ENCODE measurements at regions of chr6 and their contacts with region 1.

Region 1: GRCh38 chr6:109073344-109074132 is 21.1 kb downstream of the SESN1 start:
- DNase-seq: no peak
- H3K4me3 ChIP-seq: no peak overlapping the region
- H3K27ac ChIP-seq: peak overlapping the region in 1 of 4 donors; percentile 8
- H3K4me1 ChIP-seq: peaks cover 0 to 48% (median 19%) of the 10 kb centered on the region in 4 donors
- H3K27me3 ChIP-seq: no peaks in the 10 kb centered on the region
- CTCF ChIP-seq: peak; percentile 45 to 63 (median 56)
- EP300 ChIP-seq: peak in 1 of 4 donors; percentile 16
- POLR2A ChIP-seq: no peak

Region 2: DNA sequence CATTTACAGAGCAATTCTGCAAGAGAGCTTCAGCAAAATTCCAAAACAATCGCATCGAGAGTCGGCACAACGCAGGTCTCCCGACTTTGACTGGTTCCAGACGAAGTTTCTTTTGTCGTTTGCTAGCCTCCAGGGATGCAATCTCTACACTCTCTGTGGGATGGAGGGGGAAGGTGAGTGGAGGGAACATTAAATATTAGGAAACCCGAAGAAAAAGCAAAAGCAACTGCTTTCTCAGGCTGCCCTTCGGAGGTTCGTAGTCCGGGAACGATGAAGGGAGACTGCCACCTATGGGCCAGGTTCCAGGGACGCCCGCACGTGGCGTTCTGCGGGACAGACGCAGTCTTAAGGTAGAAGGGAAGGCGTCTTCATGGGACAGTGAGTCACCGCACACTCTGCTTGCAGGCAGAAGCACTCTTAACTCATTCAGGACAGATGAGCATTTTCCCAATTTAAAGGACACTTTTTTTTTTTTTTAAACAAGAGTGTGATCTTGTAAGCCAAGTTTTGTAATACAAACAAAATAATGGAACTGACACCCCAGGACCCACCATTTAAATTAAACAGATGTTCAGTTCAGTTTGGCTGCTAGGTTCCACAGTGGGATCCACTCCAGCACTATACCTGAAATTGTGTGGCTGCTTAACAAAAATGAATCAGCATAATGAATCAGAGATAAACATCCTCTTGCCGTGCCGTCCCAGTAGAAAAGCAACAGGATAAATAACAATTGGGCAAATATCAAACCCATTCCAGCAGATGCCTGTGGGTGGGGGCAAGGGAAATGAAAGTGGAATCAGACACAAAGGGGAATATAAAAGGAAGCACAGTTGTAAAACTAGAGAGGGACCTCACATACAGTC is 291.1 kb before region 1 on chr6:
- intact Hi-C with region 1: loop called (anchors 10 kb)
- DNase-seq: peak; percentile 93
- H3K4me3 ChIP-seq: peak overlapping the region; percentile 23 to 52 (median 42)
- H3K27ac ChIP-seq: peak overlapping the region; percentile 63 to 83 (median 68)
- H3K4me1 ChIP-seq: peaks cover 0 to 23% (median 14%) of the 10 kb centered on the region in 4 donors
- H3K27me3 ChIP-seq: no peaks in the 10 kb centered on the region
- CTCF ChIP-seq: peak; percentile 55 to 76 (median 64)
- EP300 ChIP-seq: peak in 2 of 4 donors; percentile 28 to 51
- POLR2A ChIP-seq: no peak

Region 3: GRCh38 chr6:108896111-108896661 is 177.4 kb before region 1 on chr6:
- intact Hi-C with region 1: loop called (anchors 5 kb)
- DNase-seq: no peak
- H3K4me3 ChIP-seq: no peak overlapping the region
- H3K27ac ChIP-seq: peak overlapping the region; percentile 15 to 62 (median 48)
- H3K4me1 ChIP-seq: peaks cover 0 to 3% (median 0%) of the 10 kb centered on the region in 4 donors
- H3K27me3 ChIP-seq: no peaks in the 10 kb centered on the region
- CTCF ChIP-seq: no peak
- EP300 ChIP-seq: peak in 2 of 4 donors; percentile 50 to 56
- POLR2A ChIP-seq: no peak

Region 4: GRCh38 chr6:108947114-108947854 is 126.3 kb before region 1 on chr6:
- intact Hi-C with region 1: loop called (anchors 5 kb)
- DNase-seq: no peak
- H3K4me3 ChIP-seq: no peak overlapping the region
- H3K27ac ChIP-seq: peak overlapping the region; percentile 83 to 93 (median 86)
- H3K4me1 ChIP-seq: peaks cover 0 to 79% (median 61%) of the 10 kb centered on the region in 4 donors
- H3K27me3 ChIP-seq: no peaks in the 10 kb centered on the region
- CTCF ChIP-seq: no peak
- EP300 ChIP-seq: no peak
- POLR2A ChIP-seq: no peak